Endothelial cell of umbilical vein (primary cell): ENCODE measurements at regions of chr6 and their contacts with region 1.

Region 1: DNA sequence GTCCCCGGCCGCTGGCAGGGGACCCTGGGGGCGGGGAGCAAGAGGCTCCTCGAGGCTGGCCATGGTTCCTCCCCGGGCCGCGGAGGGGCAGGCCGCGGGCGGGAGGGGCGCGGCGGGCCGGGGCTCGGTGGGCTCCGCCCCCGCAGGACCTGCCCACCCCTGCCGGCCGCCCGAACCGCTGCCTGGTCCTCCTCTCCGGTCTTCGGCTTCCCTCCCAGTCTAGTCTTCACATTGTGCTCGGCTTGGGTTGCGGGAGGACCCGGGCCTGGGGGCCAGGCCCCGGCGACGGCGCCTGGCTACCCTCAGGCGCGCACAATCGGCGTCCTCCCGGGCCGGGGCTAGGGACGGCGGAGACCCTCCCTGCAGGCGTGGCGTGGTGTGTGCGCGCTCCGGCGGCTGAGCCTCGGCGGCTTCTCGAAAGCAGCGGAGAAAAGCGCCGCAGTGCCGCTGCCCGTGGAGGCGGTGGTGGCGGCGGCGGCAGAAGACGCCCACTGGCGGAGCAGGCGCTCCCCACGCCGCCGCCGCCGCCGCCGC is at the start of gene PDE10A:
- DNase-seq: peak; percentile 57
- H3K4me3 ChIP-seq: peak within 1 kb of the TSS; percentile 4 to 59 (median 43)
- H3K27ac ChIP-seq: no peak within 1 kb of the TSS
- H3K4me1 ChIP-seq: peaks cover 13% of the 10 kb centered on the region
- H3K27me3 ChIP-seq: peaks cover 36 to 62% of the 10 kb centered on the region in 2 experiments
- CTCF ChIP-seq: no peak
- POLR2A ChIP-seq: no peak
- total RNA-seq, gene PDE10A: 2.9 and 6.5 TPM in 2 replicates

Region 2: GRCh38 chr6:165573671-165574070 is 89.1 kb before region 1 on chr6:
- CTCF ChIA-PET with region 1: interaction called, 3 read pairs
- POLR2A ChIA-PET with region 1: no interaction called
- dilution Hi-C with region 1: no loop called
- intact Hi-C with region 1: loop called (anchors 1 kb)
- DNase-seq: peak; percentile 97
- H3K4me3 ChIP-seq: no peak overlapping the region
- H3K27ac ChIP-seq: peak overlapping the region; percentile 69
- H3K4me1 ChIP-seq: peaks cover 19% of the 10 kb centered on the region
- H3K27me3 ChIP-seq: no peaks in the 10 kb centered on the region
- CTCF ChIP-seq: no peak
- POLR2A ChIP-seq: peak; percentile 26

Region 3: DNA sequence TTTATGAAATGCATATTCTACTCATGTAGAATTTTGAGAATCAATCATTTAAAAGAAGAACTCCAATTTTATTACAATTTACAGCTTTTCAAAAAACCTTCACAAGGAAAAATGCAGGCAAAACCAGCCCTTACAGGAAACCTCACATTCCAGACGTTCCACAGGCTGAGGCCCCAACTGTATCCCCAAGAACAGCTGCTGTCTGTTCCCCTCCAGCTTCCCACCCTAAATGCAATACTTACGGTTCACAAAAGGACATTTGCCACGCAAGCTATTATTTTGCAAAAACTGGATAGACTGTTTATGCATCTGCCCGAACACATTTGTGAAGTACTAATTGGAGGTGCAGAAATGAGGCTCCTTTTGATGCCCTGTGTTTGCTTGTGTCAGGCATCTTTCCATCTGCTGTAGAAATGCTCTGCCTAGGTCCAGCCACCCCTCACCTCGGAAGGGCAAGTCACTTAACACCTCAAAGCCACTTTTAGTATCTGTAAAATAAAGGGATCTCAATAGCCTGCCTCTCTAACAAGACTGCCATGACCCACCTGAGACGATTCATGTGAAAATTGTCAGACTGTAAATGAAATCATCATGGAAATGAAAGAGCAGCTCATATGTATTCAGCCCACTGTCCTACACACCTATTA is 26.3 kb before region 1 on chr6:
- CTCF ChIA-PET with region 1: no interaction called
- POLR2A ChIA-PET with region 1: no interaction called
- dilution Hi-C with region 1: no loop called
- intact Hi-C with region 1: loop called (anchors 1 kb)
- DNase-seq: peak; percentile 64
- H3K4me3 ChIP-seq: no peak overlapping the region
- H3K27ac ChIP-seq: no peak overlapping the region
- H3K4me1 ChIP-seq: no peaks in the 10 kb centered on the region
- H3K27me3 ChIP-seq: peaks cover 0 to 2% of the 10 kb centered on the region in 2 experiments
- CTCF ChIP-seq: no peak
- POLR2A ChIP-seq: no peak

Region 4: GRCh38 chr6:165766457-165766856 is 103.6 kb after region 1 on chr6:
- CTCF ChIA-PET with region 1: no interaction called
- POLR2A ChIA-PET with region 1: no interaction called
- dilution Hi-C with region 1: no loop called
- intact Hi-C with region 1: loop called (anchors 2 kb)
- DNase-seq: peak; percentile 97
- H3K4me3 ChIP-seq: peak overlapping the region in 1 of 3 experiments; percentile 11
- H3K27ac ChIP-seq: peak overlapping the region; percentile 98
- H3K4me1 ChIP-seq: peaks cover 44% of the 10 kb centered on the region
- H3K27me3 ChIP-seq: no peaks in the 10 kb centered on the region
- CTCF ChIP-seq: no peak
- POLR2A ChIP-seq: no peak

Region 5: GRCh38 chr6:165850434-165851019 is 187.7 kb after region 1 on chr6:
- CTCF ChIA-PET with region 1: no interaction called
- POLR2A ChIA-PET with region 1: no interaction called
- dilution Hi-C with region 1: no loop called
- intact Hi-C with region 1: loop called (anchors 1 kb)
- DNase-seq: peak; percentile 62
- H3K4me3 ChIP-seq: no peak overlapping the region
- H3K27ac ChIP-seq: no peak overlapping the region
- H3K4me1 ChIP-seq: no peaks in the 10 kb centered on the region
- H3K27me3 ChIP-seq: peaks cover 10 to 23% of the 10 kb centered on the region in 2 experiments
- CTCF ChIP-seq: peak; percentile 92 to 94
- POLR2A ChIP-seq: no peak